Esophagus squamous epithelium (tissue), 5 donors: ENCODE measurements at regions of chr3 and their contacts with region 1.

Region 1: GRCh38 chr3:168049367-168049974 is 46.3 kb downstream of the GOLIM4 start:
- DNase-seq: no peak
- H3K4me3 ChIP-seq: no peak overlapping the region
- H3K27ac ChIP-seq: peak overlapping the region in 1 of 4 donors; percentile 34
- H3K4me1 ChIP-seq: peaks cover 0 to 25% (median 0%) of the 10 kb centered on the region in 3 donors
- H3K27me3 ChIP-seq: no peaks in the 10 kb centered on the region
- CTCF ChIP-seq: no peak
- POLR2A ChIP-seq: no peak

Region 2: GRCh38 chr3:167587651-167588050 is 461.8 kb before region 1 on chr3:
- intact Hi-C with region 1: no loop called
- DNase-seq: no peak
- H3K4me3 ChIP-seq: no peak overlapping the region
- H3K27ac ChIP-seq: no peak overlapping the region
- H3K4me1 ChIP-seq: no peaks in the 10 kb centered on the region
- H3K27me3 ChIP-seq: no peaks in the 10 kb centered on the region
- CTCF ChIP-seq: no peak
- POLR2A ChIP-seq: no peak

Region 3: DNA sequence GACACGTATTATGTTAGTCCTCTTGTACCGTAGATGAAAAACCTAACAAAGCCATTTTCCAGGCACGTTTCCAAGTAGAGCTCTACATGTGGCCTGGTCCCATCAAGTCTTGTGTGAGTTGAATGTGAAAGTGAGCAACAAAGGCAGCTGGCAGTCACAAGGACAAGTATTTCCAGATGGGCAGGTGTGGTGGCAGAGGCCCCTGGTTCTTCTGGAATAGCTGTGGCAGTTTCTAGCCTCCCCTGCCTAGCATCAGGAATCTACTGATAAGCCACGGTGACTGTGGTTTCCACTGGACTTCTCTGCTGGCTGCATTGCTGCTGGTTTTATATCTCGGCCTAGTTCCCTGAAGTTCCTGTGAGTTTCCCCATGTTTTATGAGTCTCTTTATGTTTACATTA is 71.4 kb before region 1 on chr3:
- intact Hi-C with region 1: no loop called
- DNase-seq: no peak
- H3K4me3 ChIP-seq: no peak overlapping the region
- H3K27ac ChIP-seq: no peak overlapping the region
- H3K4me1 ChIP-seq: no peaks in the 10 kb centered on the region
- H3K27me3 ChIP-seq: no peaks in the 10 kb centered on the region
- CTCF ChIP-seq: no peak
- POLR2A ChIP-seq: no peak

Region 4: GRCh38 chr3:168165390-168166269 is 116.2 kb after region 1 on chr3:
- intact Hi-C with region 1: loop called (anchors 2 kb)
- DNase-seq: no peak
- H3K4me3 ChIP-seq: peak overlapping the region in 1 of 4 donors; percentile 17
- H3K27ac ChIP-seq: no peak overlapping the region
- H3K4me1 ChIP-seq: peaks cover 0 to 21% (median 0%) of the 10 kb centered on the region in 3 donors
- H3K27me3 ChIP-seq: no peaks in the 10 kb centered on the region
- CTCF ChIP-seq: peak; percentile 51 to 86 (median 77)
- POLR2A ChIP-seq: no peak